ENCODE measurements at regions of chr18 and their contacts with region 1.

Region 1: GRCh38 chr18:49178736-49179135 is 228.0 kb upstream of the SMAD7 start:
- DNase-seq: peak; percentile 35
- H3K4me3 ChIP-seq: no peak overlapping the region
- H3K27ac ChIP-seq: no peak overlapping the region
- H3K4me1 ChIP-seq: peaks cover 13% of the 10 kb centered on the region
- H3K27me3 ChIP-seq: no peaks in the 10 kb centered on the region
- CTCF ChIP-seq: peak; percentile 72

Region 2: GRCh38 chr18:48711651-48712486 is 466.9 kb before region 1 on chr18:
- CTCF ChIA-PET with region 1: interaction called, 20 read pairs
- POLR2A ChIA-PET with region 1: no interaction called
- intact Hi-C with region 1: no loop called
- DNase-seq: peak; percentile 64
- H3K4me3 ChIP-seq: no peak overlapping the region
- H3K27ac ChIP-seq: no peak overlapping the region
- H3K4me1 ChIP-seq: no peaks in the 10 kb centered on the region
- H3K27me3 ChIP-seq: no peaks in the 10 kb centered on the region
- CTCF ChIP-seq: peak; percentile 57

Region 3: GRCh38 chr18:49189772-49190171 is 11.0 kb after region 1 on chr18:
- CTCF ChIA-PET with region 1: no interaction called
- POLR2A ChIA-PET with region 1: interaction called, 13 read pairs
- intact Hi-C with region 1: no loop called
- DNase-seq: no peak
- H3K4me3 ChIP-seq: no peak overlapping the region
- H3K27ac ChIP-seq: no peak overlapping the region
- H3K4me1 ChIP-seq: peaks cover 7% of the 10 kb centered on the region
- H3K27me3 ChIP-seq: no peaks in the 10 kb centered on the region
- CTCF ChIP-seq: no peak

Measured in A673 (cell line).